Endothelial cell of umbilical vein (primary cell): ENCODE measurements at regions of chr14 and their contacts with region 1.

Region 1: GRCh38 chr14:59483900-59484638 is at the starts of genes JKAMP and L3HYPDH:
- DNase-seq: peak; percentile 96
- H3K4me3 ChIP-seq: peak within 1 kb of the TSS; percentile 70 to 98 (median 96)
- H3K27ac ChIP-seq: peak within 1 kb of the TSS; percentile 80
- H3K4me1 ChIP-seq: peaks cover 31% of the 10 kb centered on the region
- H3K27me3 ChIP-seq: no peaks in the 10 kb centered on the region
- CTCF ChIP-seq: peak; percentile 62 to 85
- POLR2A ChIP-seq: peak; percentile 92
- total RNA-seq, gene JKAMP: 30.8 and 39.8 TPM in 2 replicates
- total RNA-seq, gene L3HYPDH: 30.2 and 31.0 TPM in 2 replicates

Region 2: DNA sequence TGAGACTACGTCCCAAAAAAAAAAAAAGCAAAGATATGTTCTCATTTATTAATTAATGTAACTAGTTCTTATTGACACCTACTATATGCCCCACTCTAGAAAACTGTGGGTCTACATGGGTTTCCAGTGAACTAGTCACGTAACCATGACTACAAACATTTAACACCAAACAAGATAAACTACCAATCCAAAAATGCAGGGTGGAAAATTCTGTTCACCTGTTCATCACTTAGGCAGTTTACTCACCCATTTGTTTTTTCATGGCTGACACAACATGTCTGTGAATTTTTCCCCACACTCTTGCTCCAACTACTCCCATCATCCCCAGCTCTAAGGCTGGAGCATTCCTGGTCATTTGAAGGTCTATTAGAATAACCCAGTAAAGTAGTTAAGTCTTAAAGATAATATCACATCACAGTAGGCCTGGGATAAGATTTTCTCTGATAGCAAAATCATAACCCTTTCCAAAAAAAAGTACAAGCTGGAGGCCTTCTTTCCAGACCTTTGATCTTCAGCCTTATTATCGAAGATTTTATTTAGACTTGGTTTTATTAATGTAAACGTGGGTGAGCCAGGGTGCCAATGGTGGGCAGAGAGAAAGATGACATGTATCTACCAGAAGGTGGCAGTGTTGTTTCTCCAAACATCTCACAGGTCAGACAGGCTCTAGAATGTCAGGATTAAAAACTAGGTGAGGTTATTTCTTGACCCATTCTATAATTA is 357.2 kb before region 1 on chr14:
- CTCF ChIA-PET with region 1: interaction called, 4 read pairs
- POLR2A ChIA-PET with region 1: no interaction called
- dilution Hi-C with region 1: no loop called
- intact Hi-C with region 1: loop called (anchors 1 kb)
- DNase-seq: peak; percentile 64
- H3K4me3 ChIP-seq: no peak overlapping the region
- H3K27ac ChIP-seq: no peak overlapping the region
- H3K4me1 ChIP-seq: no peaks in the 10 kb centered on the region
- H3K27me3 ChIP-seq: peaks cover 5 to 6% of the 10 kb centered on the region in 2 experiments
- CTCF ChIP-seq: peak; percentile 58 to 60
- POLR2A ChIP-seq: no peak

Region 3: GRCh38 chr14:59337141-59337611 is 146.9 kb before region 1 on chr14:
- CTCF ChIA-PET with region 1: no interaction called
- POLR2A ChIA-PET with region 1: no interaction called
- dilution Hi-C with region 1: no loop called
- intact Hi-C with region 1: loop called (anchors 1 kb)
- DNase-seq: peak; percentile 70
- H3K4me3 ChIP-seq: no peak overlapping the region
- H3K27ac ChIP-seq: peak overlapping the region; percentile 87
- H3K4me1 ChIP-seq: peaks cover 61% of the 10 kb centered on the region
- H3K27me3 ChIP-seq: no peaks in the 10 kb centered on the region
- CTCF ChIP-seq: no peak
- POLR2A ChIP-seq: no peak

Region 4: GRCh38 chr14:59438195-59438647 is 45.8 kb before region 1 on chr14:
- CTCF ChIA-PET with region 1: no interaction called
- POLR2A ChIA-PET with region 1: no interaction called
- dilution Hi-C with region 1: no loop called
- intact Hi-C with region 1: no loop called
- DNase-seq: peak; percentile 75
- H3K4me3 ChIP-seq: no peak overlapping the region
- H3K27ac ChIP-seq: peak overlapping the region; percentile 70
- H3K4me1 ChIP-seq: peaks cover 29% of the 10 kb centered on the region
- H3K27me3 ChIP-seq: no peaks in the 10 kb centered on the region
- CTCF ChIP-seq: no peak
- POLR2A ChIP-seq: no peak

Region 5: DNA sequence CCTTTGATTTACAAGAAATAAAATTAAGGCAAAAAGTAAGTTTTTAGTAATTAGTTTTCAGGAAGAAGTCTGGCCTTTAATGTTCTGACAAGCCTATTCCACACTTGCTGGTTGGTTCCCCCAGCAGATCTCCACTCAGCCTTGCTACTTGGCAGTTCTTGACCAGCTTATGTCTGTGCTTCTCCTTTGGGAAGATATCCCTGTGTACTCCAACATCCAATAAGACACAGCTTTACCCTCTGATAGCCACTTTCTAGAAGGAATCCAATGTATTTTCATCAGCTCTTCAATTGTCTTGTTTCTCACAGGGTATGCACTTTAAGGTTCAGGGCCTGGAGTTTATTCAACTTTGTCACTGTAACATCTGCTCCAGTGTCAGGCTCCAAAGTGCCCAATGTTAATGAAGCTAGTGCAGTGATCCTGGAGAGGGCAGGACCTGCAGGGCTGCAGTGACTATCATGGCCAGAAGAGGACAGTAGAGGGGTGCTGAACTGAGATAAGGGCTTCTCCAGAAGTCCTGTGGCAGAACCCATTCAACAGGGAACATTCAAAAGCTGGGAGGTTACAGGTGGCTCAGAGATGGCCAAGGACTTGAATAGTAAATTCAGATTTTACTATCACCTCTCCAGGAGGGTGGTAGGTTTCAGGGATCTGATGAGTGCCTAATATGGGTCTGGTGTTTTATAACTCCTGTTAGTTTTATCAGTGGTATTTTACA is 23.2 kb after region 1 on chr14:
- CTCF ChIA-PET with region 1: interaction called, 13 read pairs
- POLR2A ChIA-PET with region 1: no interaction called
- dilution Hi-C with region 1: no loop called
- intact Hi-C with region 1: no loop called
- DNase-seq: peak; percentile 47
- H3K4me3 ChIP-seq: no peak overlapping the region
- H3K27ac ChIP-seq: no peak overlapping the region
- H3K4me1 ChIP-seq: no peaks in the 10 kb centered on the region
- H3K27me3 ChIP-seq: peaks cover 0 to 7% of the 10 kb centered on the region in 2 experiments
- CTCF ChIP-seq: peak; percentile 75 to 83
- POLR2A ChIP-seq: no peak

Region 6: DNA sequence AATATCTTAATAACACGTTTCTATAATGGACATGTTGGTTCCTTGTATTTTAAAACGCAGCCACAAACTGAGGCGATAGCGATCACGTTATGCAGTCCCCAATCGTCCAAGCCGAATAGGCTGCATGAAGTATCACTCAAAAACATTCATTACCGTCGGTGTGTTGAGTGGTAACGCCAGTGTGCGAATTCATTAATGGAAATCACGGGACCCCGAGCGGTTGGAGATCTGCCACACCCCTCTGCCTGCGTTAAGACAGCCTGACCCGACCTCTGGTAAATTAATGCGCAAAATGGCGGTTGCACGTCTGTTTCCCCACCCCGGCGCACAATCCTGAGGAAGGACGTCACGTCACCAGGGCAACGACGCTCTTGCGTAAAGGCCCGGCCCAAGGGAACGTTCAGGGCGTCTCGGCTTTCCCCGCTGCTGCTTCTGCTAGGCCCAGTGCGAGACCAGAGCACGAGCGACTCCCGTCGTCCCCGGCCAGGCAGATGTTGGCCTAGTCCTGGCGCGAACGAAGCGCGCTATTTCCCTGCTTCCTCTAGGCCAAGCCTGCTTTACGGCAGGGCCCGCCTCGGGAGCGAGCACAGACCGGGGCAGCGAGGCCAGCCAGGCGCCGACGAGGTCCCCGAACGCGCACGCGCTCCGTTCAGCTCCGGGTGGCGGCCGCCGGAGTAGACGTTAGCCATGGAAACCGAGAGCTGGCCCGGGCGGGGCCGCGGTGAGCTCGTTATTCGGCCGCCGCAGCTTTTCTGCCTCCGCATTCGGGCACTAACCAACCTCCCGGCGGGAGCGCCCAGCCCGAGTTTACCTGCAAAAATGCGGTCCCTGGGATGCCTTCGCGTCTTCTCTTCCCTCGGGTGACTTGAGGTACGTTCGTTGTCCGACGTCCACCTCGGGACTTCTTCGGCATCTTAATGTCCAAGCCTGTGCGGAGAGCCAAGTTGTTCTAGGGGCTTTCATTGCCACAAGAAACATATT is 607.8 kb after region 1 on chr14 and contains the start of gene PCNX4:
- CTCF ChIA-PET with region 1: no interaction called
- POLR2A ChIA-PET with region 1: no interaction called
- dilution Hi-C with region 1: no loop called
- intact Hi-C with region 1: loop called (anchors 5 kb)
- DNase-seq: peak; percentile 99
- H3K4me3 ChIP-seq: peak within 1 kb of the TSS; percentile 68 to 86 (median 86)
- H3K27ac ChIP-seq: peak within 1 kb of the TSS; percentile 93
- H3K4me1 ChIP-seq: peaks cover 25% of the 10 kb centered on the region
- H3K27me3 ChIP-seq: no peaks in the 10 kb centered on the region
- CTCF ChIP-seq: no peak
- POLR2A ChIP-seq: peak; percentile 96
- total RNA-seq, gene PCNX4: 41.4 and 51.6 TPM in 2 replicates